ENCODE measurements at regions of chr9 and their contacts with region 1.

Region 1: DNA sequence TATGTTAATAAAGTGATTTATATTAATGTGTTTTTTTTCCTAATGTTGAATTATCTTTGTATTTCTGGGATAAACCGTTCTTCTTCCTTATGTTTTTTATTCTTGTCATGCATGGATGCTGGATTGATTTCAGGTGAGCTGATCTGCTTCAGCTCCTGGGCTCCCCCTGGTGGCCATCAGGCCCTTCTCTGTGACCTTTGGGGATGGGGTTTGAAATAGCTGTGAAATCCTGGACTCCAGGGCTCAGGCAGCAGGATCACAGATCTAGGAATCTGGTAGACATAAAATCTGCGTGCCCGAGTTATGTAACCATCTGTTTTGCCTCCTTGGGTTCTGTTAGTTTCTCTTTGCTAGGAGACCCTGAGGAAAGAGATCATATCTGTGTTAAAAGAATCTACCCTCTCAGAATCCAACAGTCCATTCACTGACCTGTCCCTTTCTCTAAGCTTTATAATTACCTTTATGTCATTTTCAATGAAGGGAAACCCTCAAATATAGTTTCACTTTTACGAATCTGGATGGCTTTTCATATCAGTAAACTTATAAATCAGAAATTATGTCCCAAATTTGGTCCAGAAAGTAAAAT is 12.2 kb upstream of the OR13J1 start:
- DNase-seq: peak; percentile 81 to 92 (median 82)
- ATAC-seq: peak in 3 of 4 donors; percentile 82 to 85 (median 83)
- H3K4me3 ChIP-seq: no peak overlapping the region
- H3K27ac ChIP-seq: no peak overlapping the region
- H3K4me1 ChIP-seq: no peaks in the 10 kb centered on the region
- H3K27me3 ChIP-seq: peaks cover 0 to 10% (median 0%) of the 10 kb centered on the region in 9 donors
- CTCF ChIP-seq: peak; percentile 93 to 99 (median 98)
- POLR2A ChIP-seq: no peak

Region 2: DNA sequence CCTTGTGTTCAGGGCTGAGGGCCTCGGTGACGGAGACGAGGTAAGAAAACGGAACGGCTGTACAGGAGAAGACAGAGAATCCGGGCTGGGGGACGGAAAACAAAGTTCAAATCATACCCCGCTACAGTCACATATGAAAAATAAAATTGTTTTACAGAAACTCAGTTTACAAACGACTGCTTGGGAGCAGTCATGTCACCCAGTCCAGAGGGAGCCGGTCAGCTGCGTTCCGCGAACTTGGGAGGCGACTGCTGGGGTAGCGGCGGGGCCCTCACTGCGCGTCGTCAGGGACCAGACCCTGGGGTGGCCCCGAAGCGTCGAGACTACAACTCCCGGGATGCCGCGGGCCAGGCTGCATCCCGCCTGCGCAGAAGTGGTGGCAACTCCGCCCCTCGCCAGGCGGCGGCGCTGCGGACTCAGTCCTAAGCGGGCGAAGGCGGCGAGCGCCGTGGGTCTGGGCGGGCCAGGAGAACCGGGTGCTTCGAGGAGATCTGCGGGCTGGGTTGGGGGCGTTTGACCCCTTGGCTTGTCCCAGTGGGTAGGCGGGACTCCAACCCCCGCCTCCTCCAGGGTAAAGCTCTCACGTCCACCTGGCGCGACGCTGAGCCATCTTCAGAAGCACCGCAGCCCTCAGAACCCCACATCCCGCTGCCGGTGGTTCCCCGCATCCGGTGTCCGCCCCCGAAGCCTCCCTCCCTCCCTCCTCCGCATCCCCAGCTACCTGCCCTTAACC is 235.7 kb before region 1 on chr9:
- intact Hi-C with region 1: loop called in 5 of 10 experiments (anchors 5 to 10 kb)
- DNase-seq: peak; percentile 93 to 97 (median 93)
- ATAC-seq: peak; percentile 83 to 97 (median 96)
- H3K4me3 ChIP-seq: peak overlapping the region; percentile 41 to 77 (median 64)
- H3K27ac ChIP-seq: peak overlapping the region; percentile 54 to 89 (median 81)
- H3K4me1 ChIP-seq: peaks cover 0 to 63% (median 9%) of the 10 kb centered on the region in 12 donors
- H3K27me3 ChIP-seq: no peaks in the 10 kb centered on the region
- CTCF ChIP-seq: peak; percentile 92 to 99 (median 96)
- POLR2A ChIP-seq: peak in 1 of 2 donors; percentile 85

Region 3: DNA sequence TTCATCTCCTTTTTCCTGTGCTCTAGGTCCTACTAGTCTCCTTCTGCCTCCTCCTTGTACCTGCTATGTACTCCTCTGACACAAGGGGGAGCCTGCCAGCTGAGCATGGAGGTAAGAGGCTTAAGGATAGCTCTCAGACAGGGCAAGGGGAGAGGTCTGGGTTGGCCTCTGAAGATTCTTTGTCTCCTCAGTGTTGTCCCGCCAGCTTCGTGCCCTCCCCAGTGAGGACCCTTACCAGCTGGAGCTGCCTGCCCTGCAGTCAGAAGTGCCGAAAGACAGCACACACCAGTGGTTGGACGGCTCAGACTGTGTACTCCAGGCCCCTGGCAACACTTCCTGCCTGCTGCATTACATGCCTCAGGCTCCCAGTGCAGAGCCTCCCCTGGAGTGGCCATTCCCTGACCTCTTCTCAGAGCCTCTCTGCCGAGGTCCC is 146.1 kb before region 1 on chr9:
- intact Hi-C with region 1: no loop called
- DNase-seq: peak in 4 of 5 donors; percentile 66 to 72 (median 69)
- ATAC-seq: no peak
- H3K4me3 ChIP-seq: no peak overlapping the region
- H3K27ac ChIP-seq: peak overlapping the region in 4 of 12 donors; percentile 16 to 26 (median 24)
- H3K4me1 ChIP-seq: peaks cover 5 to 31% (median 15%) of the 10 kb centered on the region in 12 donors
- H3K27me3 ChIP-seq: no peaks in the 10 kb centered on the region
- CTCF ChIP-seq: peak; percentile 61 to 86 (median 74)
- POLR2A ChIP-seq: no peak

Region 4: GRCh38 chr9:35829084-35829763 is 53.1 kb before region 1 on chr9 and contains the start of gene TMEM8B:
- intact Hi-C with region 1: loop called (anchors 1 to 5 kb)
- DNase-seq: peak; percentile 97 to 99 (median 98)
- ATAC-seq: peak; percentile 89 to 95 (median 92)
- H3K4me3 ChIP-seq: peak within 1 kb of the TSS; percentile 65 to 97 (median 78)
- H3K27ac ChIP-seq: peak within 1 kb of the TSS; percentile 85 to 99 (median 94)
- H3K4me1 ChIP-seq: peaks cover 3 to 53% (median 39%) of the 10 kb centered on the region in 12 donors
- H3K27me3 ChIP-seq: no peaks in the 10 kb centered on the region
- CTCF ChIP-seq: no peak
- POLR2A ChIP-seq: peak in 1 of 2 donors; percentile 57
- total RNA-seq, gene TMEM8B: 10.8 to 21.4 (median 18.2) TPM

Region 5: DNA sequence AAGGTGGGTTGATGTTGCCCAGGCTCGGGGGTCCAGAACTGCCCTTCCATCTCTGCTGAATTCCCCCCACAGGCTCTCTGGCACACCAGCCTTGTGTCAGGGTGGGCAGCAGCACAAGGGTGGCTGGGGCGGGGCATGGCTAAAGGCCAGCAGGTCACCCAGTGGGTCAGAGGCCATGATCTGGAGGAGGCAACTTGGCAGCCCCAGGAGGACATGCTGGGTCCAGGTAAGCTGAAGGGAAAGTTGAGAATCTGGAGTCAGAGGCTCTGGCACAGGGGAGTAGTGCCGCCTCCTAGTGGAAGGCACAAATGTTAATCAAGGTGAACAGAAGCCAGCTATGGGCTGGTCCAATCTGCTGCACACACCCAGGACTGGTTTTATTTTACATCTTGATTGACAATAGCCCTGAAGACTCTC is 47.1 kb before region 1 on chr9:
- intact Hi-C with region 1: loop called in 2 of 10 experiments (anchors 2 to 5 kb)
- DNase-seq: no peak
- ATAC-seq: no peak
- H3K4me3 ChIP-seq: no peak overlapping the region
- H3K27ac ChIP-seq: no peak overlapping the region
- H3K4me1 ChIP-seq: peaks cover 3 to 41% (median 29%) of the 10 kb centered on the region in 12 donors
- H3K27me3 ChIP-seq: peaks cover 0 to 25% (median 0%) of the 10 kb centered on the region in 9 donors
- CTCF ChIP-seq: peak in 2 of 12 donors; percentile 15 to 23
- POLR2A ChIP-seq: no peak

Region 6: DNA sequence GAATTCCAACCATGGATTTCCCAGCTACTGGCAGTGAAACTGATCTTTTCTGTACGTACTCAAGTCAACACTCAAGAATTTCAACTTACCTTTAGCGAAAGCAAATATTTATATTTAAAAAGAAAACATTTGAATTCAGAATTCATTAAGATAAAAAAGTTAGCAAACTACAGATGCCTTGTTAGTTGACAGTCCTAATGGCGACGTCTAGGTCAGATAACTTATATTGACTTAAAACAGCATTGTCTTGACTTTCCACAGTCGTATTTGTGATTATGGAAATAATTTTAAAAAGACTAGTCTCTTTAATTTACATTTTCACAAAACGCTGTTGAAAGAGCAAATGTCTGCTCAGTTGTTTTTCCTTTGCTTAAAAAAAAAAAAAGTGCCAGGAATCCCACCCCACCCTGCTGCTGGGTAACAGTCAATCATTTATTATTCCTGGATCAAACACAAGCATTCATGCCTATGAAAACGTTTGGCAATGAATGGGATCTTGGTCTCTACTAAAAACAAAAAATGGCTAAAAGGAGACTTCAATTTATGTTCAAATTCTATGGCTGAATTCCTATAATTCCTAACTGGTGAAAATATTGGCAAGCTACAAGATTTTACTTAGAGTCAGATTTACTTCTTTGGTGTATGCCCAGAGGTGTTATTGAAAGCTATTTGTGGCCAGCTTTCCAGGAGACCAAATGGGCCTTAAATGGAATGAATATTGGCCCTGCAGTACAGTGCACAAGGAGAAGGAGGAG is 53.6 kb after region 1 on chr9:
- intact Hi-C with region 1: no loop called
- DNase-seq: no peak
- ATAC-seq: no peak
- H3K4me3 ChIP-seq: no peak overlapping the region
- H3K27ac ChIP-seq: no peak overlapping the region
- H3K4me1 ChIP-seq: peaks cover 0 to 21% (median 0%) of the 10 kb centered on the region in 12 donors
- H3K27me3 ChIP-seq: no peaks in the 10 kb centered on the region
- CTCF ChIP-seq: no peak
- POLR2A ChIP-seq: no peak

Region 7: GRCh38 chr9:35976726-35977125 is 94.4 kb after region 1 on chr9:
- intact Hi-C with region 1: no loop called
- DNase-seq: no peak
- ATAC-seq: no peak
- H3K4me3 ChIP-seq: no peak overlapping the region
- H3K27ac ChIP-seq: no peak overlapping the region
- H3K4me1 ChIP-seq: no peaks in the 10 kb centered on the region
- H3K27me3 ChIP-seq: peaks cover 0 to 20% (median 0%) of the 10 kb centered on the region in 9 donors
- CTCF ChIP-seq: no peak
- POLR2A ChIP-seq: no peak

Measured in heart left ventricle (tissue), 16 donors.